Dendritic cell treated with granulocyte-macrophage colony-stimulating factor and Interleukin-4, amounts not matched to agents 40 ng/mL and 50 ng/mL, for 4 days (primary cell): ENCODE measurements at regions of chr18 and their contacts with region 1.

Region 1: GRCh38 chr18:64872710-64873458 is 724.0 kb upstream of the LINC00305 start:
- H3K4me3 Mint-ChIP-seq: no peak overlapping the region
- H3K27ac Mint-ChIP-seq: no peak overlapping the region
- H3K4me1 Mint-ChIP-seq: no peaks in the 10 kb centered on the region
- H3K27me3 Mint-ChIP-seq: no peaks in the 10 kb centered on the region

Region 2: DNA sequence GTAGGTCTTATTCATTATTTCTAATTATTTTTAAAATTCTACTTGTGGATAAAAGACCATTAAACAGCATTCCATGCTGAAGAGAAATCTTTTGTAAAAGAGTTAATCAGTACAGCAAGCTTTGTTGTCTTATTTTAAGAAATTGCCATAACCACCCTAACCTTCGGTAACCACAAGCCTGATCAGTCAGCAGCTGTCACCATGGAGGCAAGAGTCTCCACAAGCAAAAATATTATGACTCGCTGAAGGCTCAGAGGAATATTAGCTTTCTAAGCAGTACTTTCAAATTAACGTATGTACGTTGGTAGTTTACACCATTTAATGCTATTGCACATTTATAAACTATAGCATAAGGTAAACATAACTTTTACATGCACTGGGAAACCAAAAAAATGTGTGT is 73.5 kb before region 1 on chr18:
- intact Hi-C with region 1: loop called (anchors 10 kb)
- H3K4me3 Mint-ChIP-seq: no peak overlapping the region
- H3K27ac Mint-ChIP-seq: no peak overlapping the region
- H3K4me1 Mint-ChIP-seq: no peaks in the 10 kb centered on the region
- H3K27me3 Mint-ChIP-seq: no peaks in the 10 kb centered on the region

Region 3: DNA sequence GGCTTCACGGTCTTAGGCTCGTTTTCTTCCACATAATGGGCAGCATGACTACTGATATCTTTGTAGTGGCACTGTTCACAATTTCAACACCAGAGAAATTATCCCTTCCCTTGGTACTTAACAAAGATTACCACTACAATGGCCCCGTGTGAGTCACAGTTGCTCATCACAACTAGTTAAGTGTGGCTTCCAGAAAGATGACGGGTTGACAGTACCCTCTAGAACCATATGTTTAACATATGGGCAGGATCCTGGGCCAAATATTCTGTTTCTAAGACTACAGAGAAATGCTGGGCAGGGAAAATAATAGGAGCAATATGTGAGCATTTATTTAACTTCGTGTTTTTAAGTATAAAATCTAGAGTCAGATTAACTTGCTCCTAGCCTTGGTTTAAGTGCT is 56.2 kb after region 1 on chr18:
- intact Hi-C with region 1: loop called (anchors 10 kb)
- H3K4me3 Mint-ChIP-seq: no peak overlapping the region
- H3K27ac Mint-ChIP-seq: no peak overlapping the region
- H3K4me1 Mint-ChIP-seq: no peaks in the 10 kb centered on the region
- H3K27me3 Mint-ChIP-seq: no peaks in the 10 kb centered on the region